Endothelial cell of umbilical vein (primary cell): ENCODE measurements at regions of chr1 and their contacts with region 1.

Region 1: GRCh38 chr1:234842726-234843641 is 233.0 kb upstream of the IRF2BP2 start:
- DNase-seq: no peak
- H3K4me3 ChIP-seq: no peak overlapping the region
- H3K27ac ChIP-seq: no peak overlapping the region
- H3K4me1 ChIP-seq: peaks cover 17% of the 10 kb centered on the region
- H3K27me3 ChIP-seq: no peaks in the 10 kb centered on the region
- CTCF ChIP-seq: no peak
- POLR2A ChIP-seq: no peak

Region 2: GRCh38 chr1:234499119-234499942 is 343.7 kb before region 1 on chr1:
- CTCF ChIA-PET with region 1: interaction called, 3 read pairs
- POLR2A ChIA-PET with region 1: no interaction called
- dilution Hi-C with region 1: no loop called
- intact Hi-C with region 1: loop called (anchors 1 kb)
- DNase-seq: peak; percentile 84
- H3K4me3 ChIP-seq: no peak overlapping the region
- H3K27ac ChIP-seq: peak overlapping the region; percentile 26
- H3K4me1 ChIP-seq: peaks cover 8% of the 10 kb centered on the region
- H3K27me3 ChIP-seq: no peaks in the 10 kb centered on the region
- CTCF ChIP-seq: peak; percentile 90 to 94
- POLR2A ChIP-seq: no peak

Region 3: GRCh38 chr1:234631721-234632125 is 211.3 kb before region 1 on chr1:
- CTCF ChIA-PET with region 1: no interaction called
- POLR2A ChIA-PET with region 1: no interaction called
- dilution Hi-C with region 1: no loop called
- intact Hi-C with region 1: loop called (anchors 1 kb)
- DNase-seq: peak; percentile 98
- H3K4me3 ChIP-seq: no peak overlapping the region
- H3K27ac ChIP-seq: peak overlapping the region; percentile 95
- H3K4me1 ChIP-seq: peaks cover 38% of the 10 kb centered on the region
- H3K27me3 ChIP-seq: no peaks in the 10 kb centered on the region
- CTCF ChIP-seq: no peak
- POLR2A ChIP-seq: no peak

Region 4: GRCh38 chr1:234772345-234773147 is 70.4 kb before region 1 on chr1:
- CTCF ChIA-PET with region 1: interaction called, 3 read pairs
- POLR2A ChIA-PET with region 1: no interaction called
- dilution Hi-C with region 1: no loop called
- intact Hi-C with region 1: loop called (anchors 5 kb)
- DNase-seq: peak; percentile 91
- H3K4me3 ChIP-seq: no peak overlapping the region
- H3K27ac ChIP-seq: peak overlapping the region; percentile 89
- H3K4me1 ChIP-seq: peaks cover 12% of the 10 kb centered on the region
- H3K27me3 ChIP-seq: peaks cover 2% of the 10 kb centered on the region in 2 experiments
- CTCF ChIP-seq: no peak
- POLR2A ChIP-seq: peak; percentile 62

Region 5: GRCh38 chr1:234911787-234912186 is 68.8 kb after region 1 on chr1:
- CTCF ChIA-PET with region 1: no interaction called
- POLR2A ChIA-PET with region 1: no interaction called
- dilution Hi-C with region 1: no loop called
- intact Hi-C with region 1: loop called (anchors 1 kb)
- DNase-seq: peak; percentile 87
- H3K4me3 ChIP-seq: no peak overlapping the region
- H3K27ac ChIP-seq: peak overlapping the region; percentile 51
- H3K4me1 ChIP-seq: peaks cover 12% of the 10 kb centered on the region
- H3K27me3 ChIP-seq: no peaks in the 10 kb centered on the region
- CTCF ChIP-seq: no peak
- POLR2A ChIP-seq: peak; percentile 42

Region 6: DNA sequence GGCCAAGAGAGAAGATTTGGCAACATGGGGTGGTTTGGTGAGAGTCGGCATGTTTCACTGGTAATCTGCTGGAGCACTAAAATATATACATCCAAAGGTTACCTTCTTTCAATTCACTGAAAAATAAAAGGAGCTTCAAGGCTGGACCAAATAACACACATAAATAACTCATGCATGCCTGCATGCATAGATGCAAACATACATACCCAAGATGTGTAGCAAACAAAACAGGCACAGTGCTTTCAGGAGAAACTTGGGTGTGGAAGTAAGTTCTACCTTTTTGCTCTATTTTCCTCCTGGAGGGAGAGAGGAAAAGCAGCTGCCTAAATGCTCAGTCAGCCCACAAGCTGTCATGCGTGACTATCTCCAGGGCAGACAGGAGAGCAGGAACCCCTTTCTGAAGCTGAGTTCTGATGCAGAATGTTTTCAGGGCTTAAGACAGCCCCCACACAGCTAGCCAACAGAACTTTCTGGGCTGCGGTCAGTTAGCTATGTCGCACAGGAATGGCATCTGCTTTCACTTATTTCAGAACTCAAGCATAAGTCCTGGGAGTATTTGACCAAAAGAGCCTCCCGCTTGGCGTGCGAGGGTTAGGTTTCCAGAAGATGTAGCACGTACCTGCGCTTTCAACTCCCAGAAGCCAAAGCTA is 119.5 kb after region 1 on chr1:
- CTCF ChIA-PET with region 1: no interaction called
- POLR2A ChIA-PET with region 1: no interaction called
- dilution Hi-C with region 1: no loop called
- intact Hi-C with region 1: loop called (anchors 1 kb)
- DNase-seq: no peak
- H3K4me3 ChIP-seq: no peak overlapping the region
- H3K27ac ChIP-seq: peak overlapping the region; percentile 3
- H3K4me1 ChIP-seq: peaks cover 34% of the 10 kb centered on the region
- H3K27me3 ChIP-seq: no peaks in the 10 kb centered on the region
- CTCF ChIP-seq: no peak
- POLR2A ChIP-seq: no peak